ENCODE measurements at regions of chr3 and their contacts with region 1.

Region 1: DNA sequence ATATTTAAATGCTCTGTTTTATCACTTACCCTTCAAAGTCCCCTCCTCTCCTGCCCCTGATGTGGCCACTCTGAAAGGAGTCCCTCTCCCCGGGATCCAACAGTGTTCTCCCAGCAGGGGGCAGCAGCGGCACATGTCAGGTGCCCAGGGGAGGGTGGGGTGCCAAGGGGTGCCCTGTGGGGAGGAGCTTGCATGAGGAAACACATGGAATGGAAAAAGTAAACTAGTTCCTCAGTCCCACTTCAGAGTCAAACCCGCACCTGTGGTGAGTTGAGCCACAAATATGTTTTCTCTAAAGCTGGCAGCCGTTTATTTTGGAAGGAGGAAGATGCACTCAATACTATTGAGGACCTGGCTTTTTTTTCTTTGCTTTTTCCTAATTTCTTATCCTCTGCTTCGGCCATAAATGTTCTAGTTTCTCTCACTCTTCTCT is 30.1 kb upstream of the NRROS start:
- DNase-seq: peak; percentile 68
- ATAC-seq: peak; percentile 100
- H3K4me3 ChIP-seq: no peak overlapping the region
- H3K27ac ChIP-seq: peak overlapping the region; percentile 30; the same call in 1 of the 2 replicates
- H3K4me1 ChIP-seq: peaks cover 4% of the 10 kb centered on the region; the same call in 1 of the 2 replicates
- H3K27me3 ChIP-seq: no peaks in the 10 kb centered on the region
- CTCF ChIP-seq: peak; percentile 83 to 95 (median 92)
- EP300 ChIP-seq: no peak
- POLR2A ChIP-seq: no peak
- RAD21 ChIP-seq: peak; percentile 100

Region 2: DNA sequence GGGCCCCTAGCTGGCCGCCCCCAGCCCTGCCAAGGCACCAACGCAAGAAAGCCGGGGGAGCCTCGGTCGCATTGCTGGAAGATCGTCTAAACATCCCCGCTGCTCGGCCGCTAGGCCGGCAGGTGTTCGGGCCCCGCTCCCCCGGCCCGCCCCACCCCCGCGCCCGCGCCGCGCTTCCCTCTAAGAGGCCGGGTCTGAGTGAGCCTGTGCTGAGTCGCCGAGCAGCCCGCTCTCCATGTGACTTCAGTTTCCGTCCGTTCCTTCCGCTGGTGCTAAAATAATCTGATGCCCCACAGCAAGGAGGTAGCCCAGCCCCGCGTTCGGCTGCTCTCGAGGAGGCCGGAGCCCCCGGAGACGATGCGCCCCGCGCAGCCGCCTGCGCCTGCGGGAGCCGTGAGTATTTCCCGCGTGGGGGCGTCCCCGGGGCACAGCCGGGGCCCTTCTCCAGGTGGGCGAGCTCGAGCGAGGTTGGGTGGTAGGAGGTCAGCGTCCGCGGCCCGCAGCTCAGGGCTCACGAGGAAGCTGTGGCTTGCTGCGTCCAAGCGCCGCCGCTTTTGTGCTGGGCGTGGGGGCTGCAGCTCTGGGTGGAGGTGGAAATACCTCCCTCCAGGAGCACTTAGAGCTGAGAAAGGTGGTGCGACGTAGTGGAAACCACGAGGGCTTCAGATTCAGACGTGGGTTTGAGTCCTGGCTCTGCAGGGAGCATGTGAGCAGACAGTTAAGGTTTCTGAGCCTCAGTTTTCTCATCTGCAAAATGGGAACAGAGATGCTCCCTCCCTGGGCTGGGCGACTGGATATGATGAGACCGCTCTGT is 30.3 kb after region 1 on chr3 and contains the start of gene NRROS:
- CTCF ChIA-PET with region 1: interaction called, 64 read pairs
- POLR2A ChIA-PET with region 1: no interaction called
- RAD21 ChIA-PET with region 1: interaction called, 31 read pairs
- SMC1A ChIA-PET with region 1: interaction called, 20 read pairs
- in situ Hi-C with region 1: no loop called
- intact Hi-C with region 1: no loop called
- DNase-seq: no peak
- ATAC-seq: peak; percentile 59
- H3K4me3 ChIP-seq: peak within 1 kb of the TSS; percentile 78
- H3K27ac ChIP-seq: peak within 1 kb of the TSS; percentile 99
- H3K4me1 ChIP-seq: peaks cover 44% of the 10 kb centered on the region
- H3K27me3 ChIP-seq: no peaks in the 10 kb centered on the region
- CTCF ChIP-seq: no peak
- EP300 ChIP-seq: 0 out of 4 replicates have a peak, but pooled peaks of 1 of the 2 experiments have one; percentile 20
- POLR2A ChIP-seq: peak; percentile 89
- RAD21 ChIP-seq: no peak
- polyA plus RNA-seq, gene NRROS: 0.35 TPM

Region 3: DNA sequence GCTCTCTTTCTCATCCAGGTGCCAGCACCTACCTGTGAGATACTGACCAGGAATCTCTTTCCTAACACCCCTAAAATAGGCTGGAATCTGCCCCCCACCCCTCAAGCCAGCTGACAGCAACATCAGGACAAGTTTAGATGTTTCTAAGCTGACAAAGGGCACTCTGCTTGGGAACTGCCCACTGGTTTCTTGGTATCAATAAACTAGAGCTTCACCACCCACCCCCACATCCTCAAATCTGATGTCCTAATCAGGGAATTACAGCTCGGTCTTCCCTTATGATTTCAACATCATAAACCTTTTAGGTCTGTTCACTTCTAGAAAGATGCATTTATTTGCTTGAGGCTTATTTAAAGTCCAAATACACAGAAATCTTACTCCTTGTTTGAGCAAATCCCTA is 68.0 kb after region 1 on chr3:
- CTCF ChIA-PET with region 1: interaction called, 13 read pairs
- POLR2A ChIA-PET with region 1: interaction called, 3 read pairs
- RAD21 ChIA-PET with region 1: interaction called, 5 read pairs
- SMC1A ChIA-PET with region 1: interaction called, 18 read pairs
- in situ Hi-C with region 1: no loop called
- intact Hi-C with region 1: no loop called
- DNase-seq: no peak
- ATAC-seq: no peak
- H3K4me3 ChIP-seq: no peak overlapping the region
- H3K27ac ChIP-seq: no peak overlapping the region
- H3K4me1 ChIP-seq: no peaks in the 10 kb centered on the region
- H3K27me3 ChIP-seq: no peaks in the 10 kb centered on the region
- CTCF ChIP-seq: no peak
- EP300 ChIP-seq: no peak
- POLR2A ChIP-seq: no peak
- RAD21 ChIP-seq: no peak

Region 4: DNA sequence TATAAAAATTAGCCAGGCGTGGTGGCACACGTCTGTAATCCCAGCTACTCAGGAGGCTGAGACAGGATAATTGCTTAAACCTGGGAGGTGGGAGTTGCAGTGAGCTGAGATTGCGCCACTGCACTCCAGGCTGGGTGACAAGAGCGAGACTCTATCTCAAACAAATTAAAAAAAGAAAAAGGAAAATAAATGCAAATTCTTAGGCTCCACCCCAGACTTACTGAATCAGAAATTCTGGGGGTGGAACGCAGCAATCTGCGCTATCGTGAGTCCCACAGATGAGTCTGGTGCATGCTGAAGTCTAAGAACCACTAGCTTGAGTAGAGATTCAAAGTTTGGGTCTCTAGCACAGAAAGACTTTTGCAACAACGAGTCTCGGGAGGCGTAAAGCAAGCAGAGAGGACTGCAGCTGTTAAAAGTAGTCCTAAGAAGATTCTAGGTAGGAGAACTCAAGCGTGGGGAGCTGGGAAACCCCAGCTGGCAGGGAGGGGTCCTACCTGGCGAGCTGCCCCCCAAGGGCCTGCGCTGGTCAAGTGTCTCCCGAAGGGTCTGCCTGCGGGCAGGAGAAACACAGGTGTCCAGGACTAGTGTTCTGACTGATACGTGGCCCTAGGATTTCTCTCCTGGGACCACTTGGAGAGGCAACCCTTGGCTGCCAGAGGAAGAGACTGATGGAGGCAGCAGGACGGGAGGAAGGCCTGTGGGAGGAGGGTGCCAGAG is 80.7 kb after region 1 on chr3:
- CTCF ChIA-PET with region 1: interaction called, 144 read pairs
- POLR2A ChIA-PET with region 1: interaction called, 10 read pairs
- RAD21 ChIA-PET with region 1: interaction called, 50 read pairs
- SMC1A ChIA-PET with region 1: interaction called, 72 read pairs
- in situ Hi-C with region 1: loop called (anchors 5 kb)
- intact Hi-C with region 1: loop called (anchors 1 kb)
- DNase-seq: no peak
- ATAC-seq: no peak
- H3K4me3 ChIP-seq: no peak overlapping the region
- H3K27ac ChIP-seq: no peak overlapping the region
- H3K4me1 ChIP-seq: no peaks in the 10 kb centered on the region; the same call in 1 of the 2 replicates
- H3K27me3 ChIP-seq: no peaks in the 10 kb centered on the region
- CTCF ChIP-seq: no peak
- EP300 ChIP-seq: no peak
- POLR2A ChIP-seq: no peak
- RAD21 ChIP-seq: no peak

Region 5: GRCh38 chr3:196739671-196740480 is 130.5 kb after region 1 on chr3 and contains the start of gene PAK2:
- CTCF ChIA-PET with region 1: interaction called, 10 read pairs
- POLR2A ChIA-PET with region 1: interaction called, 3 read pairs
- RAD21 ChIA-PET with region 1: interaction called, 3 read pairs
- SMC1A ChIA-PET with region 1: interaction called, 3 read pairs
- in situ Hi-C with region 1: no loop called
- intact Hi-C with region 1: no loop called
- DNase-seq: peak; percentile 46
- ATAC-seq: peak; percentile 93
- H3K4me3 ChIP-seq: peak within 1 kb of the TSS; percentile 95
- H3K27ac ChIP-seq: peak within 1 kb of the TSS; percentile 92
- H3K4me1 ChIP-seq: no peaks in the 10 kb centered on the region
- H3K27me3 ChIP-seq: no peaks in the 10 kb centered on the region
- CTCF ChIP-seq: no peak
- EP300 ChIP-seq: no peak
- POLR2A ChIP-seq: peak; percentile 90
- RAD21 ChIP-seq: no peak
- polyA plus RNA-seq, gene PAK2: 9.0 to 11.7 TPM

Region 6: DNA sequence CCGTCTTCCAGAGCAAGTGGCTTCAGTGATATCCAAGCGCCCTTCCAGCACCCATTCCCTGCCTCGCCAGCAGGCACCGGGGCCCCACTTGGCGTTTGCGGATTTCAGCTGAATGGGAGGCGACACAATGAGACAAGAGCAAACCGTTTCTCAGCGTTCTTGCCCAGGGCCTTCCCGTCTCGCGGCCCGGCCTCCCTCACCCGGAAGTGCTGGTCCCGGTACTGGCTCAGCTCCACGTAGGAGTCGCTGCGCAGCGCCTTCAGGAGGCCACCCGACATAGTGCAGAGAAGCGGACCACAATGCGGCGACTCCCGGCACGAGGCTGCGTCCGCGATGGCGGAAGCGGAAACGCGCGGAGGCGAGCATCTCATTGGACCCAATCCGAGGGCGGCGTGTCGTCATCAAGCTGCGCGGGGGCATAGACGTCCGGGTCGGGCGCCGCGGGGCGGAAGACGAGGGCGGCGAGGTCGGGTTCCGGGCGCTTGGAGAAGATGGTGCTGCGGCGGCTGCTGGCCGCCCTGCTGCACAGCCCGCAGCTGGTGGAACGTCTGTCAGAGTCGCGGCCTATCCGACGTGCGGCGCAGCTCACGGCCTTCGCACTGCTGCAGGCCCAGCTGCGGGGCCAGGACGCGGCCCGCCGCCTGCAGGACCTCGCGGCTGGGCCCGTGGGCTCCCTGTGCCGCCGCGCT is 333.0 kb after region 1 on chr3 and contains the start of gene NCBP2:
- CTCF ChIA-PET with region 1: no interaction called
- POLR2A ChIA-PET with region 1: no interaction called
- RAD21 ChIA-PET with region 1: interaction called, 10 read pairs
- SMC1A ChIA-PET with region 1: no interaction called
- in situ Hi-C with region 1: no loop called
- intact Hi-C with region 1: no loop called
- DNase-seq: peak; percentile 95
- ATAC-seq: peak; percentile 92
- H3K4me3 ChIP-seq: peak within 1 kb of the TSS; percentile 88
- H3K27ac ChIP-seq: peak within 1 kb of the TSS; percentile 97
- H3K4me1 ChIP-seq: peaks cover 11% of the 10 kb centered on the region
- H3K27me3 ChIP-seq: no peaks in the 10 kb centered on the region
- CTCF ChIP-seq: peak; percentile 80 to 86 (median 83)
- EP300 ChIP-seq: no peak; a peak in 1 of 4 replicates
- POLR2A ChIP-seq: peak; percentile 97
- RAD21 ChIP-seq: peak; percentile 55
- polyA plus RNA-seq, gene NCBP2: 66.6 to 94.1 TPM

Measured in GM12878 (cell line).